Heart right ventricle (tissue), 16 donors: ENCODE measurements at regions of chr6 and their contacts with region 1.

Region 1: GRCh38 chr6:30600451-30600961 is 16.5 kb downstream of the PPP1R10 start:
- DNase-seq: peak; percentile 33 to 43
- ATAC-seq: peak in 2 of 8 donors; percentile 10 to 11
- H3K4me3 ChIP-seq: no peak overlapping the region
- H3K27ac ChIP-seq: no peak overlapping the region
- H3K4me1 ChIP-seq: peaks cover 0 to 15% (median 0%) of the 10 kb centered on the region in 9 donors
- H3K27me3 ChIP-seq: no peaks in the 10 kb centered on the region
- CTCF ChIP-seq: no peak

Region 2: DNA sequence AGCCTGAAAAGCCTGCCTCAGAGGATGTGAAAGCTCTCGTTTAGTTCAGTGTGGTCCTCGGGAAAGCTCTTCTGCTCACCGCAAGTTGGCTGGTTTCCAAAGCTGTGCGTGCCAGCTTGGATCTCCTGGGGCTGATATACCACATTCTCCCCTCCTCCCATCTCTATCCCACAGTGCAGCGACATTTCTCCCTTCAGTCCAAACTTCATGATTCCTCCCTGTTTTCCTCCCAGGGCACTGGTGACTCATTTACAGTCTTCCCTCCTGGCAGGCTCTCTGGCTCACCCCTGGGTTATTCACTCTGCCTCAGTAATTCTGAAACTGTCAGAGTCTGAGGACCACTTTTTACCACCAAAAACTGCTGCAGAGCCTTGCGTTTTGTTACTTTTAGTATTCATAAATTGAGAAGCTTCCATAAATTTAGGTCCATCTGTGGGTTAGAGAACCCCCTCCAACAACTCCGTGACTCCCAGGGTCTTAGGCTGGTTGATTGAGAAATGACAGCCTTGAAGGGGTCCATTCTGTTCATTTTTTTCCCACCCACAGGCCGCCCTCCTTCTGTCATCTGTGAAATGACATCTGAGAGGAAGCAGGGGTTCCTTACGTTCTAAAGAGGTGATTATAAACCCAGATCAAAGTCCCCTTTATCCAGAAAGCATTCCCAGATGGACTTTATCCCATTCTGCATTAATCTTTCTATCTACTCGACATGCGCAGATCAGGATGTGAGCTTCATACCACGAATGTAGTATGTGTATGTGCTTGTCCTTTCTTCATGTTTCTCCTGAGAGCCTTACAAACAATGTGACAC is 445.6 kb before region 1 on chr6:
- intact Hi-C with region 1: no loop called
- DNase-seq: no peak
- ATAC-seq: peak in 2 of 8 donors; percentile 11 to 51
- H3K4me3 ChIP-seq: no peak overlapping the region
- H3K27ac ChIP-seq: no peak overlapping the region
- H3K4me1 ChIP-seq: peaks cover 0 to 24% (median 5%) of the 10 kb centered on the region in 9 donors
- H3K27me3 ChIP-seq: peaks cover 0 to 20% (median 0%) of the 10 kb centered on the region in 7 donors
- CTCF ChIP-seq: no peak

Region 3: GRCh38 chr6:30541515-30542403 is 58.7 kb before region 1 on chr6:
- intact Hi-C with region 1: loop called in 6 of 10 experiments (anchors 5 to 10 kb)
- DNase-seq: peak; percentile 63 to 73
- ATAC-seq: peak; percentile 57 to 84 (median 78)
- H3K4me3 ChIP-seq: peak overlapping the region in 9 of 10 donors; percentile 14 to 52 (median 41)
- H3K27ac ChIP-seq: peak overlapping the region; percentile 13 to 71 (median 64)
- H3K4me1 ChIP-seq: peaks cover 3 to 27% (median 17%) of the 10 kb centered on the region in 9 donors
- H3K27me3 ChIP-seq: peaks cover 0 to 7% (median 0%) of the 10 kb centered on the region in 7 donors
- CTCF ChIP-seq: peak; percentile 93 to 99 (median 99)